ENCODE measurements at regions of chr5 and their contacts with region 1.

Region 1: GRCh38 chr5:142356716-142357473 is 32.1 kb upstream of the SPRY4 start:
- DNase-seq: peak; percentile 93
- H3K4me3 Mint-ChIP-seq: peak overlapping the region; percentile 77
- H3K27ac Mint-ChIP-seq: peak overlapping the region; percentile 94
- H3K4me1 Mint-ChIP-seq: peaks cover 52% of the 10 kb centered on the region
- H3K27me3 Mint-ChIP-seq: no peaks in the 10 kb centered on the region

Region 2: GRCh38 chr5:142006363-142007236 is 350.3 kb before region 1 on chr5:
- CTCF ChIA-PET with region 1: no interaction called
- intact Hi-C with region 1: loop called (anchors 2 kb)
- DNase-seq: peak; percentile 86
- H3K4me3 Mint-ChIP-seq: peak overlapping the region; percentile 69
- H3K27ac Mint-ChIP-seq: peak overlapping the region; percentile 100
- H3K4me1 Mint-ChIP-seq: peaks cover 87% of the 10 kb centered on the region
- H3K27me3 Mint-ChIP-seq: no peaks in the 10 kb centered on the region

Region 3: DNA sequence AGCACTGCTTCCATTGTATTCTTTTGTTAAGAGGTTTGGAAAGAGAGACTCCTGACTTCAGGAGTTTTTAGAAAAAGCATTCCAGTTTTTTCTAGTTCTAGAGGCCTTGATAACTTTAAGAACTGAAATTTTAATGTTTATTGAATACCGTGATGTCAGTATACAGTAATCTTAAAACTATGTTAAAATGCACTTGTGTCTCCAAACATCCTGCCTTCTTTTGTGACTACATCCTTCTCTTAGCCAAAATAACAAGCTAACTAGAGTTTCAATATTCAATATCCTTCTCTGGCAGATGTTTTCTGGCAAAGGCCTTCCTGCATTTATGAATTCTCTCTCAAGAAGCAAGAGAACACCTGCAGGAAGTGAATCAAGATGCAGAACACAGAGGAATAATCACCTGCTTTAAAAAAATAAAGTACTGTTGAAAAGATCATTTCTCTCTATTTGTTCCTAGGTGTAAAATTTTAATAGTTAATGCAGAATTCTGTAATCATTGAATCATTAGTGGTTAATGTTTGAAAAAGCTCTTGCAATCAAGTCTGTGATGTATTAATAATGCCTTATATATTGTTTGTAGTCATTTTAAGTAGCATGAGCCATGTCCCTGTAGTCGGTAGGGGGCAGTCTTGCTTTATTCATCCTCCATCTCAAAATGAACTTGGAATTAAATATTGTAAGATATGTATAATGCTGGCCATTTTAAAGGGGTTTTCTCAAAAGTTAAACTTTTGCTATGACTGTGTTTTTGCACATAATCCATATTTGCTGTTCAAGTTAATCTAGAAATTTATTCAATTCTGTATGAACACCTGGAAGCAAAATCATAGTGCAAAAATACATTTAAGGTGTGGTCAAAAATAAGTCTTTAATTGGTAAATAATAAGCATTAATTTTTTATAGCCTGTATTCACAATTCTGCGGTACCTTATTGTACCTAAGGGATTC is 205.2 kb before region 1 on chr5:
- CTCF ChIA-PET with region 1: no interaction called
- intact Hi-C with region 1: loop called (anchors 5 kb)
- DNase-seq: peak; percentile 76
- H3K4me3 Mint-ChIP-seq: no peak overlapping the region
- H3K27ac Mint-ChIP-seq: no peak overlapping the region
- H3K4me1 Mint-ChIP-seq: peaks cover 15% of the 10 kb centered on the region
- H3K27me3 Mint-ChIP-seq: no peaks in the 10 kb centered on the region

Region 4: GRCh38 chr5:142324871-142325724 is 31.8 kb before region 1 on chr5 and contains the start of gene SPRY4:
- CTCF ChIA-PET with region 1: interaction called, 6 read pairs
- intact Hi-C with region 1: loop called (anchors 1 kb)
- DNase-seq: peak; percentile 95
- H3K4me3 Mint-ChIP-seq: peak within 1 kb of the TSS; percentile 85
- H3K27ac Mint-ChIP-seq: peak within 1 kb of the TSS; percentile 18
- H3K4me1 Mint-ChIP-seq: peaks cover 28% of the 10 kb centered on the region
- H3K27me3 Mint-ChIP-seq: peaks cover 55% of the 10 kb centered on the region
- total RNA-seq, gene SPRY4: 0.31 to 0.67 TPM

Region 5: DNA sequence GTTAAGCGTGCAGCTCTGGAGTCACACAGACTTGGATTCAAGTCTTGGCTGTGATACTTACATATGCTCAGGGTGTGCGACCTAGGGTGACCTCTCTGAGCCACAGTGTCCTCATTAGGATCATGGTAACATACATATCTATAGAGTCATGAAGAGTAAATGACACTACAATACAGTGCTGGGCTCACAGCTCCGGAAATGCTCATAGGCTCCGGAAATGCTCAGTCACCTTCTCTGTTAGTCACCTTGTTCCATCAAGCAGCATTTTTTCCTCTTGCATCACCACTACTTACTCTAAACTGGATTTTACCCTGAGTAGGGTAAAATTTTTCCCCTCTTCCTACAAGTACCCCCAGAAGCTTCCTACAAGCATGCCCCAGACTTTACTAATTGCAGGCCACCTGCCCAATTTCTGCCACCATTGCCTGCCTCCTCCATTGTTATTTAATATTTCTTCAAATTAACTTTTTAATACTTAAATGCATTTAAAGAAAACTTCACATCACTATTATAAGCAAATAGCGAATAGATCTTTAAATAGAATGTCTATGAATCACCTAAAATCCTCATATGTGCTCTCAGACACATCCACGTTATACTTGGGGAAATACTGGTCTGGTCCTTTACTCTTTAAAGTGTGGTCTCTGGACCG is 115.5 kb after region 1 on chr5:
- CTCF ChIA-PET with region 1: no interaction called
- intact Hi-C with region 1: loop called (anchors 1 kb)
- DNase-seq: peak; percentile 75
- H3K4me3 Mint-ChIP-seq: no peak overlapping the region
- H3K27ac Mint-ChIP-seq: peak overlapping the region; percentile 69
- H3K4me1 Mint-ChIP-seq: peaks cover 20% of the 10 kb centered on the region
- H3K27me3 Mint-ChIP-seq: no peaks in the 10 kb centered on the region

Region 6: DNA sequence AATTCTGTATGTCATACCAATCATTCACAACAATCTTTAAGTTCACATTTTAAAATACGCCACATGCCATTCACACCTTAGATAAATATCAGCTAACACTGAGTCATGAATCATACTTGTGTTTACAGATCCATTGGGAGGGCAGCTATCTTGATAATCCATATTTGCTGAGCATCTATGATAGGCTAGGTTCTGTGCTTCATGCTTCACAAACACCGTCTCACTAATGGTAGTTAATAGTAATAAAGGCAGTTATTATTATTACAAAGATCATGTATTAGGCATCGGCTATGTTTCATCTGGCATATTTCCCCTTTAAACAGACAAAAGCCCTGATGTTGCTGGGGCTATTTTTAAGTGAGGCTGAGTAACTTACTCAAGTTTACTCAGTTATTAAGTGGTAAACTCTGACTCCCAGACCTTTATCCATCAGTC is 1302.8 kb after region 1 on chr5:
- CTCF ChIA-PET with region 1: no interaction called
- intact Hi-C with region 1: no loop called
- DNase-seq: no peak
- H3K4me3 Mint-ChIP-seq: no peak overlapping the region
- H3K27ac Mint-ChIP-seq: no peak overlapping the region
- H3K4me1 Mint-ChIP-seq: no peaks in the 10 kb centered on the region
- H3K27me3 Mint-ChIP-seq: peaks cover 2% of the 10 kb centered on the region